Activated CD4-positive, alpha-beta T cell treated with anti-CD3 and anti-CD28 coated beads, Interleukin-2, amount 10 ng/mL, durations not matched to agents 24 days and 14 days (primary cell): ENCODE measurements at regions of chr22 and their contacts with region 1.

Region 1: GRCh38 chr22:32202539-32203180 is 2.2 kb downstream of the RFPL2 start:
- DNase-seq: peak; percentile 77
- H3K4me3 Mint-ChIP-seq: peak overlapping the region; percentile 68
- H3K27ac Mint-ChIP-seq: no peak overlapping the region
- H3K4me1 Mint-ChIP-seq: peaks cover 24% of the 10 kb centered on the region
- H3K27me3 Mint-ChIP-seq: peaks cover 19% of the 10 kb centered on the region

Region 2: GRCh38 chr22:31977141-31977841 is 225.4 kb before region 1 on chr22:
- intact Hi-C with region 1: loop called (anchors 2 kb)
- DNase-seq: peak; percentile 93
- H3K4me3 Mint-ChIP-seq: no peak overlapping the region
- H3K27ac Mint-ChIP-seq: no peak overlapping the region
- H3K4me1 Mint-ChIP-seq: peaks cover 5% of the 10 kb centered on the region
- H3K27me3 Mint-ChIP-seq: peaks cover 16% of the 10 kb centered on the region

Region 3: DNA sequence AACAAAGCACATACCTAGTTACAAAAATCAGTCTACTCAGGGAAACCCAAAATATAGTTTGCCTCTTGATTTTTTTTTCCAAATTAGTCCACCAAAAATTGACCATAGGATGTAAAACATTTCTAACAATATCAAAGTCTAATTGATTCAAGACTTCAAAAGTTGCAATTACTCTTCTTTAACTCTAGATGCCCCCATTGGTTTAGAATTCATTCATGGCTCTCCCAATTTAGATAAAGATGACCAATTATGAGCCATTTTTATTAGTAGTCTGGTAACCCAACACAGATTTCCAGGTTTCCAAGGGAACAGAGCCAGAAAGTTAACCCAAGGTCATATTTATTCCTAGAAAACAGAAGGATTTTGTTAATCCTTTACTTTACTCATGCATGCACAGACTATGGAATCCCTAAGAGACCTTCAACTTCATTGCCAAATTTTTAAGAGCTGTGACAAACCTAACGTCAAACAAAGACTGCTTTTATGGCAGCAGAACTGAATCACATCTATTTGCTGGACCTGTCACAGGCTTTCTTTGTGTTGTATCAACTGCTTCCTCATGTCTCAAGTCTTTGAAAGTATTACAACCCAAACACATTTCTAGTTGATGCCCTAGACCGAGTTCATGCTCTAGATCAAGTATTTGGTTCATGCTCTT is 98.9 kb before region 1 on chr22:
- intact Hi-C with region 1: loop called (anchors 5 kb)
- DNase-seq: no peak
- H3K4me3 Mint-ChIP-seq: no peak overlapping the region
- H3K27ac Mint-ChIP-seq: no peak overlapping the region
- H3K4me1 Mint-ChIP-seq: no peaks in the 10 kb centered on the region
- H3K27me3 Mint-ChIP-seq: peaks cover 22% of the 10 kb centered on the region

Region 4: DNA sequence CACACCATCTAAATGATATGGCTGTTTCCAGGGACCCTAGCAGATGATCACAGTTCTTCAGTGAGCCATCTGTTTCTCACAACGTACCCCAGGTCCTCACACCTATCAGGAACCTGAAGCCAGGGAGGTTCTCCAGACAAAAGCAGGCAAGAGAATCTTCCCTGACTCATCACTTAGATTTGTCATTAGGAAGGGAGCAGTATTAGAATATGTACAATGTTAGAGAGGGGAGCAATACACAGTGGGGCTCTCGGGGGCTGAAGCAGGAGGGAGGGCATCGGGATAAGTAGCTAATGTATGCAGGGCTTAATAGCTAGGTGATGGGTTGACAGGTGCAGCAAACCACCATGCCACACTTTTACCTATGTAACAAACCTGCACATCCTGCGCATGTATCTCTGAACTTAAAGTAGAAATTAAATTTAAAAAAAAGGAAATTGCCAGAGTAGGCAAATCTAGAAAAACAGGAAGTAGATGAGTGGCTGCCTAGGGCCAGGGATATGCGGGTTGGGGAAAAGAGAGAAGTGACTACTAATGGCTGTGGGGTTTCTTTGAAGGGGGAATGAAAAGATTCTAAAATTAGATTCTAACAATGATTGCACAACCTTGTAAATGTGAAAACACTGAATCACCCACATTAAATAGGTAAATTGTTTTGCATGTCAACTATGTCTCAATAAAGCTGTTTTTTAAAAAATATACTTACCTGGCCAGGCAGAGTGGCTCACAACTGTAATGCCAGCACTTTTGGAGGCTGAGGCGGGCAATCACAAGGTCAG is 58.0 kb before region 1 on chr22:
- intact Hi-C with region 1: loop called (anchors 2 kb)
- DNase-seq: no peak
- H3K4me3 Mint-ChIP-seq: no peak overlapping the region
- H3K27ac Mint-ChIP-seq: peak overlapping the region; percentile 80
- H3K4me1 Mint-ChIP-seq: peaks cover 43% of the 10 kb centered on the region
- H3K27me3 Mint-ChIP-seq: peaks cover 3% of the 10 kb centered on the region

Region 5: DNA sequence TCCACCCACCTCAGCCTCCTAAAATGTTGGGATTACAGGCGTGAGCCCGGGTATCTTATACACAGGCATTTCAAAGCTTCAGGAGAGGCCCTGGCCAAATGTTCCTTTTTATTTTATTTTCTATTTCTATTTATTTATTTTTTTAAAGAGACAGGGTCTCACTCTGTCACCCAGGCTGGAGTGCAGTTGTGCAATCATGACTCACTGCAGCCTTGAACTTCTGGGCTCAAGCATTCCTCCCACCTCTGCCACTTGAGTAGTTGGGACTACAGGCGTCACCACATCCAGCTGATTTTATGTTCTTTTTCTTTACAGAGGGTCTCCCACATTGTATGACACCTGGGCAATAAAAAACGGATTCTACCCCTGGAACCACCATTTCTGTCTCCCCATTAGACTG is 343.1 kb after region 1 on chr22:
- intact Hi-C with region 1: no loop called
- DNase-seq: no peak
- H3K4me3 Mint-ChIP-seq: no peak overlapping the region
- H3K27ac Mint-ChIP-seq: no peak overlapping the region
- H3K4me1 Mint-ChIP-seq: no peaks in the 10 kb centered on the region
- H3K27me3 Mint-ChIP-seq: no peaks in the 10 kb centered on the region